IMR-90 (cell line): ENCODE measurements at regions of chr3 and their contacts with region 1.

Region 1: DNA sequence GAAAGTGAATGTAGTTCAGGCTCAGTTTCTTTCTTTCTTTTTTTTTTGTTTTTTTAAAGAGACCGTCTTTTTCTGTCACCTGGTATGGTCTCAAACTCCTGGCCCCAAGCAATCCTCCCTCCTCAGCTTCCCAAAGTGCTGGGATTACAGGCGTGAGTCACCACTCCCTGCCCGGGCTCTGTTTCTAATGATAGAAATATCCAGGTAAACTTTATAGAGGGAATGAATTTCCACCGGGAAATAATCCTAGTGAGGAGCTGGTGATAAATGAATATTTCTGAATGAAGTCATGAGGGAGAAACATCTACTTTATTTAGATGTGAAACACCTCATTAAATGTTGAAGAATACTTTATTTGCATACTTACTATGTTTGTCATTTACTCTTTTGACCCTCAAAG is 7.2 kb downstream of the RNF13 start:
- DNase-seq: no peak
- ATAC-seq: no peak
- H3K4me3 ChIP-seq: no peak overlapping the region
- H3K27ac ChIP-seq: no peak overlapping the region
- H3K4me1 ChIP-seq: no peaks in the 10 kb centered on the region
- H3K27me3 ChIP-seq: no peaks in the 10 kb centered on the region
- CTCF ChIP-seq: no peak
- POLR2A ChIP-seq: no peak
- RAD21 ChIP-seq: no peak

Region 2: GRCh38 chr3:149790268-149790667 is 29.9 kb before region 1 on chr3:
- CTCF ChIA-PET with region 1: no interaction called
- POLR2A ChIA-PET with region 1: no interaction called
- dilution Hi-C with region 1: no loop called
- in situ Hi-C with region 1: no loop called
- intact Hi-C with region 1: no loop called
- DNase-seq: peak; percentile 44
- ATAC-seq: no peak
- H3K4me3 ChIP-seq: no peak overlapping the region
- H3K27ac ChIP-seq: no peak overlapping the region
- H3K4me1 ChIP-seq: peaks cover 3% of the 10 kb centered on the region; the same call in 1 of the 2 replicates
- H3K27me3 ChIP-seq: no peaks in the 10 kb centered on the region
- CTCF ChIP-seq: no peak
- POLR2A ChIP-seq: no peak
- RAD21 ChIP-seq: no peak

Region 3: DNA sequence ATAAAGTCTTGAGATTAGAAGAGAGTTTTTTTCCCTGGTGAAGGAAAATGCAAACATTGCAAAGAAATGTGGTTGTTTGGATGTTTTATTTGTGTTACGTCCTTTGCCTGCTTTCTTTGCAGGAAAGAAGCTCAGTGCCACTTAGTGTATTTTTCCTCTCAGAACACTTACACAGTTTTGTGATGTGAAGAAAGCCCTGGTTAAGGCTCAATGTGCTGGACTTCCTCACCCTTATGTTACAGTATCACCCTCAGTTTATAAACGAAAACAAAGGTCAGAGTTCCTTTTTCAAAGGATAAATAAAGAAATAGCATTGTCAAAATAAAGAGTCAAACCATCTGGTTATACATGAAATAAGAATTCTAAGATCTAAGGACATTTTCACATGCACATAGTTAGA is 38.7 kb after region 1 on chr3:
- CTCF ChIA-PET with region 1: no interaction called
- POLR2A ChIA-PET with region 1: no interaction called
- dilution Hi-C with region 1: no loop called
- in situ Hi-C with region 1: no loop called
- intact Hi-C with region 1: loop called (anchors 5 kb)
- DNase-seq: no peak
- ATAC-seq: peak; percentile 49
- H3K4me3 ChIP-seq: no peak overlapping the region
- H3K27ac ChIP-seq: no peak overlapping the region
- H3K4me1 ChIP-seq: no peaks in the 10 kb centered on the region
- H3K27me3 ChIP-seq: no peaks in the 10 kb centered on the region
- CTCF ChIP-seq: no peak
- POLR2A ChIP-seq: no peak
- RAD21 ChIP-seq: no peak